GM12878 (cell line): ENCODE measurements at regions of chr1 and their contacts with region 1.

Region 1: GRCh38 chr1:3483801-3484444 is 29.5 kb downstream of the ARHGEF16 start:
- DNase-seq: no peak
- ATAC-seq: peak; percentile 79
- H3K4me3 ChIP-seq: no peak overlapping the region
- H3K27ac ChIP-seq: no peak overlapping the region
- H3K4me1 ChIP-seq: no peaks in the 10 kb centered on the region
- H3K27me3 ChIP-seq: no peaks in the 10 kb centered on the region
- CTCF ChIP-seq: peak; percentile 59 to 89 (median 68)
- EP300 ChIP-seq: no peak
- POLR2A ChIP-seq: no peak
- RAD21 ChIP-seq: peak; percentile 33

Region 2: GRCh38 chr1:3453203-3453761 is 30.6 kb before region 1 on chr1:
- CTCF ChIA-PET with region 1: interaction called, 23 read pairs
- POLR2A ChIA-PET with region 1: no interaction called
- RAD21 ChIA-PET with region 1: no interaction called
- SMC1A ChIA-PET with region 1: interaction called, 7 read pairs
- in situ Hi-C with region 1: no loop called
- intact Hi-C with region 1: loop called (anchors 1 kb)
- DNase-seq: peak; percentile 1
- ATAC-seq: peak; percentile 96
- H3K4me3 ChIP-seq: no peak overlapping the region
- H3K27ac ChIP-seq: no peak overlapping the region
- H3K4me1 ChIP-seq: no peaks in the 10 kb centered on the region
- H3K27me3 ChIP-seq: no peaks in the 10 kb centered on the region
- CTCF ChIP-seq: peak; percentile 83 to 95 (median 94)
- EP300 ChIP-seq: no peak
- POLR2A ChIP-seq: no peak
- RAD21 ChIP-seq: peak; percentile 82

Region 3: DNA sequence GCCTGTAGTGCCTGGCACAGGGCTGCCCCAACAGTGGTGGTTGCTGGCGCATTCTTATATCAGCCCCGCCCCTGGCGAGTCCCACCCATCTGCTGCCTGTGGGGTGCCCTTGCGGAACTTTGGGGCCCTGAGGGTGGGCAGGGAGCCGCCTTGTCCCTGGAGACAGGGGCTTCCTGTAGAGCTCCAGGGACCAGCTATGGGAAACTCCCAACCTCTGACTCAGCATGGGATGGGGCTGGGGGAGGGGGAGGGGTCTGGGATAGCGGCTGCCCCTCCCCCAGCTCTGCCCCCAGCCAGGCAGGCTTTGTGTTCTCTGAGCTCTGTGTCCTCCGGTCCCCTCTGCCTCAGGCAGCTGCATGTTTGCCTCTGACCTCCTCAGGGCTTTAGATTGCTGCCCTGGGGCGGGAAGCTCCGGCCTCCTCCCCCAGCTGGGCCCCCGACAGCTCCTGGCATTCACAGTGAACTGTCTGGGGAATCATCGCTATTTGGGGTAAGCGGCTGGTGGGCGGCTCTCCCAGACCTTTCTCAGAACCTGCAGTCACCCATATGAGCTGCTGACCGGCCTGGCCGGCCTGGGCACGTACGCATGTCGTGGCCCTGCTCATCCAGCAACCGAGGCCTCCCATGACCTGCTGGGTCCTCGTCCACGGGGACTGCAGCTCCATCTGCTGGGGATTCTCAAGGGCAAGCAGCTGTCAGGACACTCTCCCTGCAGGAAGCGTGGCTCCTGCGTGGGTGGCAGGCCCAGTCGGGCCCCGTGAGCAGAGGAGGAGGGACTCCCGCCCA is 12.4 kb before region 1 on chr1:
- CTCF ChIA-PET with region 1: no interaction called
- POLR2A ChIA-PET with region 1: no interaction called
- RAD21 ChIA-PET with region 1: no interaction called
- SMC1A ChIA-PET with region 1: no interaction called
- in situ Hi-C with region 1: no loop called
- intact Hi-C with region 1: no loop called
- DNase-seq: no peak
- ATAC-seq: no peak
- H3K4me3 ChIP-seq: no peak overlapping the region
- H3K27ac ChIP-seq: no peak overlapping the region
- H3K4me1 ChIP-seq: no peaks in the 10 kb centered on the region
- H3K27me3 ChIP-seq: no peaks in the 10 kb centered on the region
- CTCF ChIP-seq: no peak
- EP300 ChIP-seq: no peak
- POLR2A ChIP-seq: no peak
- RAD21 ChIP-seq: no peak

Region 4: DNA sequence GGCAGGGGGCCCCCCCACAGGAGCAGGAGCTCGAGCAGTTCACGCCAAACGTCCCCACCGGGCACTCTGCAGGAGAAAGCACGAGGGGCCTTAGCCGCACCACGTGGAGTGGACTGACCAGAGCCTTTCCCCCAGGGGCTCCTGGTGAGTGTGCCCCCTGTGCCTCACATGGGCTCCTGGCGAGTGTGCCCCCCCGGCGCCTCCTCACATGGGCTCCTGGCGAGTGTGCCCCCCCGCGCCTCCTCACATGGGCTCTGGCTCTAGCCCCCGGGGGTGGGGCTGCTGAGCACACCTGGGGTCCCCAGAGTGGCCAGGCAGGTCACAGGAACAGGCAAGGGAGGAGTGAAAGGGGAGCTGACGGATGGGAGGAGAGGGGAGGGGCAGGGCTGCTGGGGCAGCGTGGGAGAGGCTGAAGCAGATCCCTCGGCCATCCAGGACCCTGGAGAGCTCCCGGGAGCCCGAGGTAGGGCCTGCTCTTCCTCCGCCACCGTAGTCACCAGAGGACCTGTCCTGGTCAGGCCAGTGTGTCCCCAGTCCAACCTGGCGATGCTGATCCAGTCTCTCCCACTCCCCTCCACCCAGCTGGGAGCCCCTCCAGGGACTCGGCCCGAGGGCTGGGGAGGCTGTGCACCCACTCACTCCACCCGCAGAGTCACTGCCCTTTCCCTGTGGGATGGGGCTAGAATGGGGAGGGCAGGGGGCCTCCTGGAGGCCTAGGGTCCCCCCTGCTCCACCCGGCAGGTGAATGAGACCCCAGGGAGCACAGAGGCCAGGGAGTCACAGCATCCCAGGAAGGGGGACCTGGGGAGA is 18.1 kb after region 1 on chr1:
- CTCF ChIA-PET with region 1: no interaction called
- POLR2A ChIA-PET with region 1: no interaction called
- RAD21 ChIA-PET with region 1: no interaction called
- SMC1A ChIA-PET with region 1: no interaction called
- in situ Hi-C with region 1: no loop called
- intact Hi-C with region 1: no loop called
- DNase-seq: no peak
- ATAC-seq: peak; percentile 45; the same call in 1 of the 3 replicates
- H3K4me3 ChIP-seq: no peak overlapping the region
- H3K27ac ChIP-seq: no peak overlapping the region
- H3K4me1 ChIP-seq: no peaks in the 10 kb centered on the region
- H3K27me3 ChIP-seq: no peaks in the 10 kb centered on the region
- CTCF ChIP-seq: no peak
- EP300 ChIP-seq: no peak
- POLR2A ChIP-seq: no peak
- RAD21 ChIP-seq: no peak